H1 (cell line): ENCODE measurements at regions of chr10 and their contacts with region 1.

Region 1: GRCh38 chr10:68156373-68157185 is 47.3 kb downstream of the MYPN start:
- DNase-seq: no peak
- H3K4me3 ChIP-seq: no peak overlapping the region
- H3K27ac ChIP-seq: no peak overlapping the region
- H3K4me1 ChIP-seq: peaks cover 0 to 12% (median 9%) of the 10 kb centered on the region in 4 experiments; a peak in 5 of 7 replicates
- H3K27me3 ChIP-seq: no peaks in the 10 kb centered on the region
- CTCF ChIP-seq: peak in 2 of 3 experiments; percentile 57 to 77; a peak in 3 of 4 replicates
- EP300 ChIP-seq: no peak
- POLR2A ChIP-seq: no peak
- RAD21 ChIP-seq: peak; percentile 80 to 83

Region 2: GRCh38 chr10:68082872-68083271 is 73.7 kb before region 1 on chr10:
- CTCF ChIA-PET with region 1: interaction called, 49 read pairs
- POLR2A ChIA-PET with region 1: no interaction called
- DNase-seq: no peak
- H3K4me3 ChIP-seq: no peak overlapping the region
- H3K27ac ChIP-seq: no peak overlapping the region
- H3K4me1 ChIP-seq: peaks cover 0 to 5% (median 0%) of the 10 kb centered on the region in 4 experiments; a peak in 1 of 7 replicates
- H3K27me3 ChIP-seq: no peaks in the 10 kb centered on the region
- CTCF ChIP-seq: peak in 1 of 3 experiments; percentile 11; a peak in 1 of 4 replicates
- EP300 ChIP-seq: no peak
- POLR2A ChIP-seq: no peak
- RAD21 ChIP-seq: peak in 1 of 2 experiments; percentile 36; a peak in 3 of 4 replicates

Region 3: DNA sequence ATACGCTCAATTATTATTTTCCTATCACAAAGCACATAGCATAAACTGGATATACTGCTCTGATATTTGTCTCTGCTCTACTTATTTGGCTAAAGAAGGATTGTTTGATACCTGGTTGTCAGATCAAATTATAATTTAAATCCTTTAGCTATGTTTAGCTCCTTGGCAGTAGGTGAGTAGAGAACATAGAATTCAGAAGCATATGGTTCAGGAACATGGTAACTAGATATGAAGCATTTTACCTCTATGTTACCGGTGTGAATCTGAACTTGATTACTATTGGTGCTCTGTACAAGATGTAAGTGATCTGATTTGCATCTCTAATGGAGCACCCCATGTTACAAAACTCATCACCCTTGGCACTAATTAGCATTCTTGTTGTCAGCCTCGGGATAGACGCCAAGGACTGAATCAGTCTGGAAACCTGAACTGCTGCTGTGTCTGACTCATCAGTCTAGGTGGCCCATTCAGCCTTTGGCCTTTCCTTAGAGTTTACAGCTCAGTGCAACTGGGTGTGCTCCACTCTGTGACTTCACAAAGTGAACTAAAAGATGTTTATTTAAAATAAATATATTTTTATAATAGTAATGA is 59.6 kb before region 1 on chr10:
- CTCF ChIA-PET with region 1: interaction called, 12 read pairs
- POLR2A ChIA-PET with region 1: no interaction called
- DNase-seq: peak in 1 of 2 experiments; percentile 50
- H3K4me3 ChIP-seq: no peak overlapping the region
- H3K27ac ChIP-seq: no peak overlapping the region
- H3K4me1 ChIP-seq: peaks cover 0 to 4% (median 2%) of the 10 kb centered on the region in 4 experiments; a peak in 2 of 7 replicates
- H3K27me3 ChIP-seq: no peaks in the 10 kb centered on the region
- CTCF ChIP-seq: no peak
- EP300 ChIP-seq: no peak
- POLR2A ChIP-seq: no peak
- RAD21 ChIP-seq: no peak

Region 4: GRCh38 chr10:68121852-68122251 is 34.7 kb before region 1 on chr10:
- CTCF ChIA-PET with region 1: interaction called, 12 read pairs
- POLR2A ChIA-PET with region 1: no interaction called
- DNase-seq: no peak
- H3K4me3 ChIP-seq: no peak overlapping the region
- H3K27ac ChIP-seq: no peak overlapping the region
- H3K4me1 ChIP-seq: no peaks in the 10 kb centered on the region; a peak in 1 of 7 replicates
- H3K27me3 ChIP-seq: no peaks in the 10 kb centered on the region
- CTCF ChIP-seq: no peak
- EP300 ChIP-seq: no peak
- POLR2A ChIP-seq: no peak
- RAD21 ChIP-seq: no peak

Region 5: DNA sequence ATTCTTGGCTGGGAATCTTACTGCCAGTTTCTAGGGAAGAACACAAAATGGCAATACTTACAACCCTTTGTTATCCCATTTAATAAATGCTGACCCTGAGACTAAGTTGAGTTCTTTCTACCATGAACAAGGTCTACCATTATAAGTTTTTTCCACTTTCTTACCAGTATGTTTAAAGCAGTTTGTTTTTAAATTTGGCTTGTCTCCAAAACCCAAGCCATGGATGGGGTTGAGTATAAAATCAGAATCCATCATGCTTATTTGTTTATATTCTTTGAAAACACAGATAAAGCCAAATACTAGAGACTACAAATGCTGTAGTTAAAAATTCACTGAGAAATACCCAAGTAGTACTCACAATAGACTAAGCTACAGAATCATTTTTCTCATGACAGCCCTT is 134.2 kb after region 1 on chr10:
- CTCF ChIA-PET with region 1: no interaction called
- POLR2A ChIA-PET with region 1: no interaction called
- DNase-seq: no peak
- H3K4me3 ChIP-seq: no peak overlapping the region
- H3K27ac ChIP-seq: no peak overlapping the region
- H3K4me1 ChIP-seq: no peaks in the 10 kb centered on the region
- H3K27me3 ChIP-seq: no peaks in the 10 kb centered on the region
- CTCF ChIP-seq: no peak
- EP300 ChIP-seq: no peak
- POLR2A ChIP-seq: no peak
- RAD21 ChIP-seq: no peak